IMR-90 (cell line): ENCODE measurements at regions of chr20 and their contacts with region 1.

Region 1: GRCh38 chr20:45293041-45294002 is 13.3 kb upstream of the RBPJL start:
- DNase-seq: peak; percentile 46
- ATAC-seq: peak; percentile 93
- H3K4me3 ChIP-seq: peak overlapping the region; percentile 37
- H3K27ac ChIP-seq: no peak overlapping the region; the same call in 1 of the 2 replicates
- H3K4me1 ChIP-seq: no peaks in the 10 kb centered on the region
- H3K27me3 ChIP-seq: peaks cover 17% of the 10 kb centered on the region
- CTCF ChIP-seq: peak; percentile 83
- POLR2A ChIP-seq: no peak
- RAD21 ChIP-seq: no peak; the same call in 1 of the 2 replicates

Region 2: DNA sequence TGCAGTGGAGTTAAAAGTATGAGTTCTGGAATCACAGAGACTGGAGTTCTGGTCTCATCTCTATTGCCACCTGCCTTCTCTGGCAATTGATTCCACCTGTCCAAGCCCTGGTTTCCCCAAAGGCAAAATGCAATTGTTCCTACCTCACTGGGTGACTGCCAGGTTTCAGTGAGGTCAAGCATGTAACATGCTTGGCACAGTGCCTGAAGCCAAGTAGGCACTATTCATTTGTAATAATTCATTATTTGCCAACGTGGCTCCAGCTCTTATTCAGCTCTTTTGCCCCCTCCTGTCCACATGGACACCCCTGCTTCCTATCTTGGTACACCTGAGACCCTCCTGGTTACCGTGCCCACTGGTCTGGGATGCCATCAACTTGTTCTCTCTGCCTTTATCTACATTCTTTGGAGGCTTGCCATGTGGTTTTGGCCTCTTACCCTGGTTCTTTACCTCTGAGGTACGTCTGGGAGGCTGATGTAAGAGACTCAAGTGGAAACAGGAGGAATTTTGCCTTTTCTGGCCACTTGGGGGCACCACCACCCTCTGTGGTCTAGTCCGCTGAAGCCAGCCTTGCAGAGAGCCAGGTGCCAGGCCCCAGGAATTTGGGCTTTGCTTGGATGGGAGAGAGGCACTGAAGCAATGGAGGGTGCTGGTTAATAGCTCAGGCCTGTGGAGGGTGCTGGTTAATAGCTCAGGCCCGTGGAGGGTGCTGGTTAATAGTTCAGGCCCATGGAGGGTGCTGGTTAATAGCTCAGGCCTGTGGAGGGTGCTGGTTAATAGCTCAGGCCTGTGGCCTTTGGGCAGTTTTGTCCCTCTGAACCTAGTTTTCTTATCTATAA is 545.9 kb before region 1 on chr20:
- CTCF ChIA-PET with region 1: no interaction called
- POLR2A ChIA-PET with region 1: no interaction called
- dilution Hi-C with region 1: no loop called
- in situ Hi-C with region 1: no loop called
- intact Hi-C with region 1: loop called (anchors 5 kb)
- DNase-seq: peak; percentile 53
- ATAC-seq: peak; percentile 64
- H3K4me3 ChIP-seq: no peak overlapping the region
- H3K27ac ChIP-seq: no peak overlapping the region
- H3K4me1 ChIP-seq: peaks cover 1% of the 10 kb centered on the region; the same call in 1 of the 2 replicates
- H3K27me3 ChIP-seq: peaks cover 82% of the 10 kb centered on the region
- CTCF ChIP-seq: peak; percentile 66
- POLR2A ChIP-seq: no peak
- RAD21 ChIP-seq: peak; percentile 54

Region 3: GRCh38 chr20:45011108-45011526 is 282.2 kb before region 1 on chr20:
- CTCF ChIA-PET with region 1: interaction called, 5 read pairs
- POLR2A ChIA-PET with region 1: no interaction called
- dilution Hi-C with region 1: no loop called
- in situ Hi-C with region 1: loop called (anchors 10 kb)
- intact Hi-C with region 1: loop called (anchors 1 kb)
- DNase-seq: peak; percentile 80
- ATAC-seq: peak; percentile 74
- H3K4me3 ChIP-seq: no peak overlapping the region
- H3K27ac ChIP-seq: no peak overlapping the region
- H3K4me1 ChIP-seq: peaks cover 15% of the 10 kb centered on the region
- H3K27me3 ChIP-seq: no peaks in the 10 kb centered on the region
- CTCF ChIP-seq: peak; percentile 75
- POLR2A ChIP-seq: no peak
- RAD21 ChIP-seq: peak; percentile 81

Region 4: GRCh38 chr20:45044084-45044573 is 249.2 kb before region 1 on chr20:
- CTCF ChIA-PET with region 1: interaction called, 19 read pairs
- POLR2A ChIA-PET with region 1: no interaction called
- dilution Hi-C with region 1: no loop called
- in situ Hi-C with region 1: no loop called
- intact Hi-C with region 1: loop called (anchors 1 kb)
- DNase-seq: peak; percentile 86
- ATAC-seq: peak; percentile 94
- H3K4me3 ChIP-seq: no peak overlapping the region
- H3K27ac ChIP-seq: no peak overlapping the region
- H3K4me1 ChIP-seq: peaks cover 10% of the 10 kb centered on the region
- H3K27me3 ChIP-seq: no peaks in the 10 kb centered on the region
- CTCF ChIP-seq: peak; percentile 94
- POLR2A ChIP-seq: no peak
- RAD21 ChIP-seq: peak; percentile 92

Region 5: DNA sequence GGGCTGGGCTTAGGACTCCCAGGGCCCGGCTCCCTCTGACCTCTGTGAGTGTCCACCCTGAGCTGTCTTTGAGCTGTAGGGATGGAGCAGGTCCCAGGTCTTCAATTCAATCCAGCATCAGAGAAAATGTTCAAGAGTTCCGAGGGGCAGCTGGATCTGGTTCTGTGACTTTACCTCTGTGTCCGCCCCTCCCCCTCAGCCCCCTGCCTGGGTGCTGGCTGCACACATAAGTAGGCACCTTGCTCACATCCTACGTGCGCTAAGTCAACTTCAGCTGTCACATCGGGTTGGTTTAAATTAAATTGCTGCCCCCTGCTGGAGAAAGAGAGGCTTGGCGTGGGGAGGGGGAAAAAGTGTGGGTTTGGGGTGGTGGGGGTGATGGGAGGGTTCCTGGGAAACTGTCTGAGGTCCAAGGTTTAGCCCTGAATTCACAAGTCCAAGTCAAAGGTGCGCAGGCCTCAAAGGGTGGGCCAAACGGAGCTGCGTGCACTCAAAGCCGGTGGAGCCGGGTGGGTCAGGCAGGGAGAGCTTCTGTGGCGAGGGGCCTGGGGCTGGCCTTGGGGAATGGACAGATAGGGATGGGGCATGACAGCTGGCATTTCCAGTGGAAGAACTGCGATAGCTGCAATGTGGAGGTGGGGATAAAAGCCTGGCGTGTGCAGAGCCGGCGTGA is 181.4 kb before region 1 on chr20:
- CTCF ChIA-PET with region 1: interaction called, 6 read pairs
- POLR2A ChIA-PET with region 1: no interaction called
- dilution Hi-C with region 1: no loop called
- in situ Hi-C with region 1: loop called (anchors 25 kb)
- intact Hi-C with region 1: no loop called
- DNase-seq: no peak
- ATAC-seq: peak; percentile 48; the same call in 1 of the 2 replicates
- H3K4me3 ChIP-seq: no peak overlapping the region
- H3K27ac ChIP-seq: no peak overlapping the region
- H3K4me1 ChIP-seq: no peaks in the 10 kb centered on the region
- H3K27me3 ChIP-seq: peaks cover 40% of the 10 kb centered on the region
- CTCF ChIP-seq: peak; percentile 40
- POLR2A ChIP-seq: no peak
- RAD21 ChIP-seq: peak; percentile 31

Region 6: DNA sequence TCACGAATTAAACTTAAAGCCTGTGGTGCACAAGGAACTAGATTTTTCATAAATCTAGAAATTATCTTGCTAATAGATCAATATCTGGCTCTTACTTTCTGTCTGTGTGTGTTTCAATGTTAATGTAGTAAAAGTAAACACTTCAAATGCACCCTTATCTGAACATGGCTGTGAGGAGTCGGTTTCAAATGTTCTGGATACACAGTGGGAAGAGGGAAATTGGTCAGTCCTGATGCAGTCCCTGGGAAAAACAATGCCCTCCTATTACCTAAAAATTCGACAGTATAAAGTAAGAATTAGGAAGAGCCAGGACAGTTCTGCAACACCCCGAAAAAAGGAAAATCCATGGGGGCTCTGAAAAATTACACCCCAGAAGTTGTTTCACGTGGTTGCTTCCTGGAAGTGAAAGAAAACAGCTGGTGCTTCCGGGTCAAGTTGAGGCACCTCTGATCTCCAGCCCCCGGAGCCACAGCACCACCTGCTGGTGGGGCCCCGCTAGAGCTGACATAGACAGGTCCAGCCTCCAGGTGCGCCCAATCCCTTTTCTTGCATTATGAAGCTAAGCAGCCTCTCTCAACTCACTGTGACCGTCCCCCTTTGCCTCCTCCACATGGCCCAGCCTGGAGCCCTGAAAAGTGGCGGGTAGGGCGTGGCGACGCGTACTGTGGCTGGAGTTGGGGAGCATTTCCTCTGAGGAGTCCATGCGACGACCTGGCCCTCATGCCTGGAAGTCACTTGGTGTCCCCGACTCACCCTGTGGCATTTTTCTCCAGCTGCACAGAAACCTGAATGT is 63.9 kb before region 1 on chr20:
- CTCF ChIA-PET with region 1: no interaction called
- POLR2A ChIA-PET with region 1: no interaction called
- dilution Hi-C with region 1: no loop called
- in situ Hi-C with region 1: no loop called
- intact Hi-C with region 1: no loop called
- DNase-seq: no peak
- ATAC-seq: no peak
- H3K4me3 ChIP-seq: no peak overlapping the region
- H3K27ac ChIP-seq: no peak overlapping the region
- H3K4me1 ChIP-seq: no peaks in the 10 kb centered on the region
- H3K27me3 ChIP-seq: peaks cover 4% of the 10 kb centered on the region
- CTCF ChIP-seq: peak; percentile 40
- POLR2A ChIP-seq: no peak
- RAD21 ChIP-seq: peak; percentile 34